ENCODE measurements at regions of chr5 and their contacts with region 1.

Region 1: GRCh38 chr5:82165740-82166530 is 112.2 kb downstream of the RPS23 start:
- DNase-seq: no peak
- H3K4me3 ChIP-seq: no peak overlapping the region
- H3K27ac ChIP-seq: peak overlapping the region; percentile 21 to 63 (median 46)
- H3K4me1 ChIP-seq: peaks cover 11 to 41% (median 25%) of the 10 kb centered on the region in 4 donors
- H3K27me3 ChIP-seq: no peaks in the 10 kb centered on the region
- CTCF ChIP-seq: peak; percentile 73 to 85 (median 80)
- EP300 ChIP-seq: no peak
- POLR2A ChIP-seq: no peak

Region 2: DNA sequence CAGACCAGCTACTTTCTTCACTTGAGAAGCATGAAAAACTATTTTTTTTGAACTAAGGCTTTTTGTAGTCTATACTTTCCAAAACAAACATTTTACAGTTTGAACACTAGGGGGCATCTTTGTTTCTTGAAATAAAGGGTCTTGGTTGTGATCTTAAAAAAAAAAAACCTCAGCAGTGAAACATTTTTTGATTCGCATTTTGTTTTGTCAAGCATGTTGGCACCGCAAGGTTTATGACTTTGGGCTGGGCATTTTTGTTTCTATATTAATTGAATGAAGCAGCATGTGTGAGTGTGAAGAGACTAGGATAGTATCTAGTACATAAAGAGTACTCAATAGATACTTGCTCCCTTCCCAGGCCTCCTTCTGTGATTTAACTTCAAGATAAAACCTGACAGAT is 740.4 kb before region 1 on chr5:
- intact Hi-C with region 1: loop called (anchors 5 kb)
- DNase-seq: no peak
- H3K4me3 ChIP-seq: no peak overlapping the region
- H3K27ac ChIP-seq: peak overlapping the region in 3 of 4 donors; percentile 25 to 43 (median 28)
- H3K4me1 ChIP-seq: peaks cover 15 to 27% (median 20%) of the 10 kb centered on the region in 4 donors
- H3K27me3 ChIP-seq: no peaks in the 10 kb centered on the region
- CTCF ChIP-seq: peak; percentile 62 to 64 (median 64)
- EP300 ChIP-seq: no peak
- POLR2A ChIP-seq: no peak

Region 3: GRCh38 chr5:81506900-81507588 is 658.9 kb before region 1 on chr5:
- intact Hi-C with region 1: loop called (anchors 2 kb)
- DNase-seq: no peak
- H3K4me3 ChIP-seq: no peak overlapping the region
- H3K27ac ChIP-seq: peak overlapping the region in 3 of 4 donors; percentile 8 to 34 (median 29)
- H3K4me1 ChIP-seq: peaks cover 10 to 25% (median 19%) of the 10 kb centered on the region in 4 donors
- H3K27me3 ChIP-seq: no peaks in the 10 kb centered on the region
- CTCF ChIP-seq: peak; percentile 88 to 94 (median 90)
- EP300 ChIP-seq: no peak
- POLR2A ChIP-seq: no peak

Region 4: DNA sequence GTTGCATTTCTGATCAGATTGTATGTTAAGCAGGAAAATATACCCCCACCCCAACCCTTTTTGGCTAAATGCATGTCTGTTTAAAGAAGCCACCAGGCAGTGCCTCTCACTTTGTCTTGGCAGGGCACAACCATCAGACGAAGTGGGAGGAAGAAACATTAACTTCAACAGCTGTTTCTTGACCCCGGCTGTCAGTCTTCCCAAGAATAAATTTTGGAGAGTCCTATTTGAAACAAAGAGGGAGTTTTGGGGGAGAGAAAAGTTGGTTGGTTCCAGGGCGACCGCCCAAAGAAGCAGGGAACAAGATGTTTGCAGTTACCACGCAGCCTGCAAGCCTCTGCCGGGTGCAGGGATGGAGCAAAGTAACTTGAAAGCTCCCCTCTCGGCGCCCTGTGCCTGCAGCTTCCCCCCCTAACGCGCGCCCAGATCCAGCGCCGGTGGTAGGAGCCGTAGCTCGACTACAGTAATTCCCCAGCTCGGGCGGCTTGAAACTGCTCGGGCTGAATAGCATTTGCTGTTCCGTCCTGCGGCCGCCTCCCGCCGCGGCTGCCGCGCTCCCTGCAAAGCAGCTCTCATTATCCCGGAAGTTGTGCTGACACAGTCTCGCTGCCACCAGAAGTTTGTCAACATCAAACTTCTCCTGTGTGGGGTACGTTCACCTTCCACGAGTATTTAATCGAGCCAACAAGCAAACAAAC is 314.3 kb before region 1 on chr5:
- intact Hi-C with region 1: loop called (anchors 5 kb)
- DNase-seq: peak; percentile 97
- H3K4me3 ChIP-seq: peak overlapping the region; percentile 52 to 67 (median 58)
- H3K27ac ChIP-seq: peak overlapping the region; percentile 80 to 91 (median 86)
- H3K4me1 ChIP-seq: peaks cover 39 to 85% (median 81%) of the 10 kb centered on the region in 4 donors
- H3K27me3 ChIP-seq: no peaks in the 10 kb centered on the region
- CTCF ChIP-seq: peak in 1 of 3 experiments; percentile 14
- EP300 ChIP-seq: peak; percentile 36
- POLR2A ChIP-seq: no peak

Region 5: DNA sequence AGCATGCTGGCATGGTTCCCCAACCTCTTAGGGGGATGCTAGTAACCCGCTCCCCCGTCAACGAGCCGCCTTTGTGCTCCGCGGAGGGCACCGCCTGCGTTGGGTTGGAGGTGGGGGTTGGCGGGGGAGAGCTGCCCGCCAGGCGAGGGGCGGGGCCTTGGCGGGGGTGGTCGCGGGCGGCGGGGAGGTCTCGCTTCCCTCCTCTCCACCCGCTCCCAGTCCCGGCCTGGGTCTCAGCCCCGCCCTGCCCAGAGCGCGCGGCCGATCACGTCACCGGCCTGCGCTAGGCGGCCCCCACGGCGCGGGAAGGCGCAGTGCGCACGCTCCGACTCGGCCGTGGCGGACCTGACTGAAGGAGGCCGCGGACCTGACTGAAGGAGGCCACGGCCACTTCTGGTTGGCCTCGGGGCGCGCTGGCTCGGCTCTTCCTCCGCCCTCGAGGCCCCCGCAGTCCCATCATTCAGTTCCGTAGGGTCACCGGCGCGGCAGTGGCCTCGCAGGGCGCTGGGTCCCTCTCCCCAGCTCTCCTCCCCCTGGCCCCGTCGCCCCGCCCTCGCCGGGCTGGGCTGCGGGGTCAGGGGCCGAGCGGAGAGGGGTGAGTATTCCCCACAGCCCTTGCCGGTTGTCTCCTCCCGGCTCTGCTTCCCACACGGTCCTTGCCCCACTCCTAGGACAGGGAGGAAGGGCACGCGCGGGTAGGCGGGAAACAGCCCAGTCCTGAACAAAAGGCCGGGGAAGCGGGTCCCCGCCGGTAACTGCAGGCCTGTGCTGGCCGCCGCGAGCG is 194.0 kb before region 1 on chr5 and contains the start of gene ATG10:
- intact Hi-C with region 1: loop called (anchors 5 kb)
- DNase-seq: peak; percentile 97
- H3K4me3 ChIP-seq: peak within 1 kb of the TSS; percentile 70 to 87 (median 82)
- H3K27ac ChIP-seq: peak within 1 kb of the TSS; percentile 98 to 99 (median 98)
- H3K4me1 ChIP-seq: peaks cover 0 to 16% (median 12%) of the 10 kb centered on the region in 4 donors
- H3K27me3 ChIP-seq: no peaks in the 10 kb centered on the region
- CTCF ChIP-seq: no peak
- EP300 ChIP-seq: no peak
- POLR2A ChIP-seq: peak; percentile 91
- total RNA-seq, gene ATG10: 5.2 to 9.1 (median 7.3) TPM

Region 6: DNA sequence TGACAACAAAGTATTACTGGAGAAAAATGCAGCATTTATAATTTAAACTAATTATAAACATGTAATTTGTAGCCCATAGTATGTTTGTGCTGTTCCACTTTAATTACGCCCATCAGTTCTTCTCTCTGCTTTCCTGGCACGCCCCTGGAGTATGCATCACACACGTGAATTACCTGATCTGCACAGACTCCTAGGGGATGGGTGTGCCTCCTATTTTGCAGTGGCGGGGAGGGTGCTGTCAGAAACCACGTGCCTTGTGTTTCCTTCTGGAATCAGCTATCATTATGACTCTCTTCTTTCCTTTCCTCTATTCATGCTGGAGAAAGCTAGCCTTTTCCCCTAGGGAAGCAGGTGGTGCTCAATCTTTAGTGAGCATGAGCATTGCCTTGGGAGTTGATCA is 68.9 kb after region 1 on chr5:
- intact Hi-C with region 1: no loop called
- DNase-seq: no peak
- H3K4me3 ChIP-seq: no peak overlapping the region
- H3K27ac ChIP-seq: no peak overlapping the region
- H3K4me1 ChIP-seq: peaks cover 0 to 3% (median 0%) of the 10 kb centered on the region in 4 donors
- H3K27me3 ChIP-seq: no peaks in the 10 kb centered on the region
- CTCF ChIP-seq: no peak
- EP300 ChIP-seq: no peak
- POLR2A ChIP-seq: no peak

Region 7: DNA sequence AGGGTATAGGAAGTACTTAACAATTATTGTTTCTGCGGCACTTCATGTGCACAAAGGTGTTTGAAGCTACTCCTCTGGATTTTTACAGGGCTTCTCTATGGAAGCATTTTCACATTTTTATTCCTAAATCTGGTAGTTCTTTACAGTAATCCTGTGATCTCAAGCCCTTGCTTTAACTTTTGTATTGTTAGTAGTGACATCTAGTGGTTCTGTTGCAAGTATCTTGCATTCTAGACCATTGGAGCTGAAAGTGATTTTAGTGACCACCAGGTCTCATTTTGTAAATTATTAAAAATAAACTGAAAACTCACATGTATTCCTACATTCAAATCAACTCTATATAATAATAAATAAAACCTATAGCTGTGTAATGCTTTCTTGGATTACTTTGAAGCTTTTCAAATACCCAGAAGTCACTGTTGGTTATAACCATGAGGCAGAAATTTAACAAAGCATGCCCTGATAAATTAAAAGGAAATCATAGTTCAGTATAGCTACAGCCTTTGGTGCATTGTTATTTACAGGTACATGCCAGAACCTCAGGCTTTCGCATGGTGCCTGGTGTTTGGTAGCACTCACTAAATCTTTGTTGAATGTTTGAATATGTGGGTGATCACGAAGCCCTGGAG is 93.4 kb after region 1 on chr5:
- intact Hi-C with region 1: no loop called
- DNase-seq: no peak
- H3K4me3 ChIP-seq: no peak overlapping the region
- H3K27ac ChIP-seq: no peak overlapping the region
- H3K4me1 ChIP-seq: peaks cover 3 to 12% (median 8%) of the 10 kb centered on the region in 4 donors
- H3K27me3 ChIP-seq: no peaks in the 10 kb centered on the region
- CTCF ChIP-seq: peak in 2 of 3 experiments; percentile 32 to 35
- EP300 ChIP-seq: no peak
- POLR2A ChIP-seq: no peak

Region 8: GRCh38 chr5:82334856-82335255 is 168.9 kb after region 1 on chr5:
- intact Hi-C with region 1: no loop called
- DNase-seq: no peak
- H3K4me3 ChIP-seq: no peak overlapping the region
- H3K27ac ChIP-seq: peak overlapping the region; percentile 34 to 70 (median 62)
- H3K4me1 ChIP-seq: peaks cover 21 to 36% (median 29%) of the 10 kb centered on the region in 4 donors
- H3K27me3 ChIP-seq: no peaks in the 10 kb centered on the region
- CTCF ChIP-seq: no peak
- EP300 ChIP-seq: no peak
- POLR2A ChIP-seq: no peak